Activated CD4-positive, alpha-beta memory T cell treated with anti-CD3 and anti-CD28 coated beads, Interleukin-2, amount 10 ng/mL, durations not matched to agents 7 days and 5 days (primary cell): ENCODE measurements at regions of chr12 and their contacts with region 1.

Region 1: DNA sequence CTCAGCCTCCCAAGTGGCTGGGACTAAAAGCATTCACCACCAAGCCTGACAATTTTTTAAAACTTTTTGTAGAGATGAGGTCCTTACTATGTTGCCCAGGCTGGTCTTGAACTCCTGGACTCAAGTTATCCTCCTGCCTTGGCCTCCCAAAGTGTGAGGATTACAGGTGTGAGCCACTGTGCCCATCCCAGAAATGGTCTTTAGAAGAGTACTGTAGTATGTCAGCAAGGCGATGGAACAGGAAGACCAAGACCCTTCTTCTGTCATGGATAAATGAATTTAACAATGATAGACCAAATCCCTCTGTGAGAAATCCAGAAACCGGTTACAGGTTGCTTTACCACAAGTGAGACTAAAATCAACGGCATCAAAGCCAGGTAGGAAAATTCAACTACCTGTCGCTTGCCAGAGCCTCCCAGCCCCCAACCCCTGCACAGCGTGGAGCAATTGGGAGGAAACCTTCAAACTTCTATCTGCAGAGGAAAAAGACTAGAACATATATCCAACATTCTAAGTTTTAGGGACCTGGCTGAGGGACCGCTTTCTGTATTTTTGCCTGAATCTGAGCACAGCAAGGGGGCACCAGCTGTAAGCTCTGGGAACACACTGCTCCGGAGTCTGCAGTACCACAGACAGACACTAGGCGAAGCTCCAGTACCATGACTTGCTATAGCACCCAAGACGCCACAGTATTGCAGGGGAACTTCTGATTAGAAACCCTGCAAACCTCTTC is 51.3 kb downstream of the CPSF6 start:
- DNase-seq: peak; percentile 83
- H3K4me3 Mint-ChIP-seq: no peak overlapping the region
- H3K27ac Mint-ChIP-seq: no peak overlapping the region
- H3K4me1 Mint-ChIP-seq: peaks cover 5% of the 10 kb centered on the region
- H3K27me3 Mint-ChIP-seq: peaks cover 41% of the 10 kb centered on the region

Region 2: GRCh38 chr12:69639400-69640016 is 348.8 kb after region 1 on chr12:
- CTCF ChIA-PET with region 1: interaction called, 15 read pairs
- POLR2A ChIA-PET with region 1: no interaction called
- DNase-seq: peak; percentile 66
- H3K4me3 Mint-ChIP-seq: no peak overlapping the region
- H3K27ac Mint-ChIP-seq: no peak overlapping the region
- H3K4me1 Mint-ChIP-seq: no peaks in the 10 kb centered on the region
- H3K27me3 Mint-ChIP-seq: no peaks in the 10 kb centered on the region

Region 3: DNA sequence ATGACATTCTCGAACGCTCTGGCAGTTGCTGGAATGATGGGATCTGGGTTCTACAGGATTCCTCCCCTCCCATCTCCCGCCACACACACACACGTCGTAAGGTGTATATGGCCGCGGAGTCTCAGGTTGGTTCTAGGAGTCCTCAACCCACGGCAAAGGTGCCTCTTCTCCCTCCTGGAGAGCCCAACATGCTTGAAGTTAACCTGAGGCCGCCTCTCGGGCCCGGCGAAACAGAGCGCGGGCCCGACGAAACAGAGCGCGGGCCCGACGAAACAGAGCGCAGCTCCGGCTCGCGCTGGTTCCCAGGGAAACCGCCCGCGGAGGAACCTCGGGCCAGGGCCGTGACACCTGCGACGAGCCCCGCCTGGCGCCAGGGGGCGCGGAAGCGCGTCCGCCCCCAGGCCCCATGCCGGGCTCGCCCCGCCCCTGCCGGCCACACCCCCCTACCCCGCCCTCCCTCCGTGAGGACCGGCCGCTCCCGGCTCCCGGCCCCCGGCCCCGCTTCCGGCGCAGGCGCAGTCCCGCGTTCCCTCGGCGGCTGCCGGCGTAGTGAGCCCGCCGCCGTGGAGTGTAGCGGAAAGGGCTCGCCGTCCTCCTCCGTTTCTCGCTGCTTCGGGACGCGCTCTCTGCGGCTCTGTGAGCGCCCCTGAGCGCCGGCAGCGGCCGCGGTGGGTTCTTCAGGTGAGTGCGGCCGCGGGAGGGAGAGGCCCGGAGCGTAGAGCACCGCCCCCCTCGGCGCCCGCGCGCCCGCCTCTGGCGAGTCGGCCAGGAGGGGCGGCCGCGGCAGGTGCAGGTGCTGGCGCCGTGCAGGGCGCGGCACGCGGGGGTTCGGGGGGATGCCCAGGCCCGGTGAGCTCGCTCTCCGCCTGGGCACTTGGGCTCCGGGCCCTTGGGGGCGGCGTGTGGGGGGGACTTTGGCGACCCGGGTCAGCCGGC is 447.9 kb after region 1 on chr12 and contains the start of gene RAB3IP:
- CTCF ChIA-PET with region 1: no interaction called
- POLR2A ChIA-PET with region 1: no interaction called
- DNase-seq: peak; percentile 93
- H3K4me3 Mint-ChIP-seq: peak within 1 kb of the TSS; percentile 80
- H3K27ac Mint-ChIP-seq: peak within 1 kb of the TSS; percentile 60
- H3K4me1 Mint-ChIP-seq: peaks cover 18% of the 10 kb centered on the region
- H3K27me3 Mint-ChIP-seq: peaks cover 27% of the 10 kb centered on the region
- total RNA-seq, gene RAB3IP: 17.0 to 29.9 TPM